GM10248 (cell line): ENCODE measurements at regions of chr13 and their contacts with region 1.

Region 1: DNA sequence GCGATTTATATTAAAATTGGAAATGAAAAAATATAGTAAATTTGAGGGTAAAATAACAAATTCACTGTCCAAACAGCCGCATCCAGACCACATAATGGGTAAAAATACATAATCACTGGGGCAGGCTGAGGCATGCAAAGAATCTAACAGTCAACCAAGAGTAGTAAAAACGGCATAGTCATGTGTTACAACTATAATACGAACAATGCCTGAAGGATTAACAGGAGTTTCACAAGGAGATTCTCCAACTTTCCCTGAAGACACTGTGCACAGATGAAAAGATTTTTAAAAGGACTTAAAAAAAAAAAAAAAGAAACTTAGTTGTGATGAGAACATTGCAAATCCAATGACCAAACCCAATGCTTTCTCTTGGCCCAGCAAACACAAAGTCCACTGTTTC is 20.4 kb upstream of the ATXN8OS start:
- DNase-seq: no peak
- CTCF ChIP-seq: no peak

Region 2: GRCh38 chr13:69980799-69981198 is 106.4 kb before region 1 on chr13:
- CTCF ChIA-PET with region 1: no interaction called
- POLR2A ChIA-PET with region 1: no interaction called
- DNase-seq: no peak
- CTCF ChIP-seq: no peak

Region 3: GRCh38 chr13:70098669-70099068 is 11.4 kb after region 1 on chr13:
- CTCF ChIA-PET with region 1: interaction called, 13 read pairs
- POLR2A ChIA-PET with region 1: no interaction called
- DNase-seq: no peak
- CTCF ChIP-seq: peak; percentile 18